ENCODE measurements at regions of chr6 and their contacts with region 1.

Region 1: GRCh38 chr6:83067448-83068413 is at the start of gene DOP1A:
- DNase-seq: peak; percentile 81
- H3K4me3 ChIP-seq: peak within 1 kb of the TSS; percentile 85
- H3K27ac ChIP-seq: no peak within 1 kb of the TSS
- H3K27me3 ChIP-seq: no peaks in the 10 kb centered on the region
- CTCF ChIP-seq: peak; percentile 99
- polyA plus RNA-seq, gene DOP1A: 11.3 and 14.6 TPM in 2 replicates

Region 2: GRCh38 chr6:82227770-82228169 is 840.0 kb before region 1 on chr6:
- CTCF ChIA-PET with region 1: interaction called, 16 read pairs
- POLR2A ChIA-PET with region 1: no interaction called
- DNase-seq: no peak
- H3K4me3 ChIP-seq: no peak overlapping the region
- H3K27ac ChIP-seq: no peak overlapping the region
- H3K27me3 ChIP-seq: no peaks in the 10 kb centered on the region
- CTCF ChIP-seq: no peak

Region 3: GRCh38 chr6:82371799-82372546 is 695.8 kb before region 1 on chr6:
- CTCF ChIA-PET with region 1: interaction called, 29 read pairs
- POLR2A ChIA-PET with region 1: no interaction called
- DNase-seq: no peak
- H3K4me3 ChIP-seq: no peak overlapping the region
- H3K27ac ChIP-seq: no peak overlapping the region
- H3K27me3 ChIP-seq: no peaks in the 10 kb centered on the region
- CTCF ChIP-seq: no peak

Region 4: DNA sequence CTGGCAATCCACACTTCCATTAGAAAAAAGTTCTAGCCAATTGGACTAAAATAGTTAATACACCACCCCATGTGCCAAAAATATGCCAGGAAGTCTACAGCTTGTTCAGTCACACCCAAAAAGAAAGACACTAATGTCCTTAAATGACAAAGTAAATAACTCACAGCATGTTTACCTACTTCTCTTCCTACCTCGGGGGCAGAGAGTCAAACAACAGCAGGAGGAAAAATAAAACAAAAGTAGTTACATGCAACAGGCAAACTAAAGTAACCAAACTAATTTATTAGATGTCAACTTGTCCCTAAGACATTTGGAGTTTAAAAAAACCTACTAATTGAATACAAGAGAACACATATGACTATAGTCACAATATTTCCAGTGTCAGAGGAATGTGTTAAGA is 59.1 kb before region 1 on chr6:
- CTCF ChIA-PET with region 1: no interaction called
- POLR2A ChIA-PET with region 1: no interaction called
- DNase-seq: no peak
- H3K4me3 ChIP-seq: no peak overlapping the region
- H3K27ac ChIP-seq: no peak overlapping the region
- H3K27me3 ChIP-seq: no peaks in the 10 kb centered on the region
- CTCF ChIP-seq: no peak

Region 5: GRCh38 chr6:83108378-83108777 is 40.6 kb after region 1 on chr6:
- CTCF ChIA-PET with region 1: interaction called, 16 read pairs
- POLR2A ChIA-PET with region 1: no interaction called
- DNase-seq: no peak
- H3K4me3 ChIP-seq: no peak overlapping the region
- H3K27ac ChIP-seq: no peak overlapping the region
- H3K27me3 ChIP-seq: no peaks in the 10 kb centered on the region
- CTCF ChIP-seq: no peak

Region 6: DNA sequence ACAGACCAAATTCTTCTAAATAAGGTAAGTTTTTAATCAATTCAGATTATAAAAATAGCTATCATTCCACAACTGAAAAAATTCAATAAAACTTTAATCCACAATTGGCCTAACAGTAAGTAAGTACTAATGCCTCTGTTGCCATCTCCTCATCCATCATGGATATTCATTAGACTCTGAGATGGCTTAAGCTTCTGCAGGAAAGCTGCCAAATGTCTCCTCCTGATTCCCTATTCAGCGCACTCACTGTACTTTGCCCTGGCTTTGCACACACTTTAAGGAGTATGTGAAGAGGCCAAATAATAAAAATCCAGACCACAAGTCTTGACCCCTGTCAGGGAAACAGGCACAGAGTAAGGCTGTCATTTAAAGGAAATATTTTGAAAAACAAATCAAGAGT is 101.8 kb after region 1 on chr6:
- CTCF ChIA-PET with region 1: interaction called, 28 read pairs
- POLR2A ChIA-PET with region 1: no interaction called
- DNase-seq: no peak
- H3K4me3 ChIP-seq: no peak overlapping the region
- H3K27ac ChIP-seq: no peak overlapping the region
- H3K27me3 ChIP-seq: no peaks in the 10 kb centered on the region
- CTCF ChIP-seq: no peak

Region 7: GRCh38 chr6:83215131-83216047 is 147.7 kb after region 1 on chr6:
- CTCF ChIA-PET with region 1: interaction called, 534 read pairs
- POLR2A ChIA-PET with region 1: interaction called, 9 read pairs
- DNase-seq: peak; percentile 51
- H3K4me3 ChIP-seq: no peak overlapping the region
- H3K27ac ChIP-seq: peak overlapping the region; percentile 85
- H3K27me3 ChIP-seq: no peaks in the 10 kb centered on the region
- CTCF ChIP-seq: peak; percentile 94

Region 8: GRCh38 chr6:83417880-83418663 is 350.3 kb after region 1 on chr6:
- CTCF ChIA-PET with region 1: interaction called, 28 read pairs
- POLR2A ChIA-PET with region 1: no interaction called
- DNase-seq: peak; percentile 39
- H3K4me3 ChIP-seq: no peak overlapping the region
- H3K27ac ChIP-seq: no peak overlapping the region
- H3K27me3 ChIP-seq: no peaks in the 10 kb centered on the region
- CTCF ChIP-seq: peak; percentile 77

Region 9: DNA sequence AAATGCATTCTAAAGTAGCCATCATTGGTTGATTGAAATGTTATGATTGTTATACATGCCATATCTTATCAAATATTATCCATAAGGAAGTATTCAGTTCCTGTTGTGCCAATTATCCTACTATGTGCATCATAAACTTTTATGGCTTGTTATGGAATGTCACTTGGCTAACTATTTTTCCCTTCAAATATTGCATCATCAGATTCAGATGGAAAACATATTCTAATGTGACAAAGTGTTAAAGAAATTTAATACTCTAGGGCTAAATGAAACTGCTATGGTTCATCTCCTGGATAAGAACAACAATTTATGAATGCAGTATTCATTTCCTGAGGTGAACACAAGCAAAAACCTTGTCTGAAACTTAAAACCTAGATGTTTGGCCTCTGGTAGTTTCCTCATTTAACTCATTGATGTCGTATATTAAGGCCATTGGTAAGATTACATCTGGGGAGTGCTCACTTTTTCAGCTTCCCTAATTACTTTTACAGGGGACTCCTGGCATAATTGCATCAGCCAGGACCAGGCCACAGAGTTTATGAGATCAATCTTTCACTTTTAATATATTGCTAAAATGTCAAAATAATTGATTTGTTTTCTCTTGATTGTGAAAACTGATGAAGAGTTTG is 1294.6 kb after region 1 on chr6:
- CTCF ChIA-PET with region 1: no interaction called
- POLR2A ChIA-PET with region 1: no interaction called
- DNase-seq: no peak
- H3K4me3 ChIP-seq: no peak overlapping the region
- H3K27ac ChIP-seq: no peak overlapping the region
- H3K27me3 ChIP-seq: no peaks in the 10 kb centered on the region
- CTCF ChIP-seq: no peak